ENCODE measurements at regions of chr1 and their contacts with region 1.

Region 1: DNA sequence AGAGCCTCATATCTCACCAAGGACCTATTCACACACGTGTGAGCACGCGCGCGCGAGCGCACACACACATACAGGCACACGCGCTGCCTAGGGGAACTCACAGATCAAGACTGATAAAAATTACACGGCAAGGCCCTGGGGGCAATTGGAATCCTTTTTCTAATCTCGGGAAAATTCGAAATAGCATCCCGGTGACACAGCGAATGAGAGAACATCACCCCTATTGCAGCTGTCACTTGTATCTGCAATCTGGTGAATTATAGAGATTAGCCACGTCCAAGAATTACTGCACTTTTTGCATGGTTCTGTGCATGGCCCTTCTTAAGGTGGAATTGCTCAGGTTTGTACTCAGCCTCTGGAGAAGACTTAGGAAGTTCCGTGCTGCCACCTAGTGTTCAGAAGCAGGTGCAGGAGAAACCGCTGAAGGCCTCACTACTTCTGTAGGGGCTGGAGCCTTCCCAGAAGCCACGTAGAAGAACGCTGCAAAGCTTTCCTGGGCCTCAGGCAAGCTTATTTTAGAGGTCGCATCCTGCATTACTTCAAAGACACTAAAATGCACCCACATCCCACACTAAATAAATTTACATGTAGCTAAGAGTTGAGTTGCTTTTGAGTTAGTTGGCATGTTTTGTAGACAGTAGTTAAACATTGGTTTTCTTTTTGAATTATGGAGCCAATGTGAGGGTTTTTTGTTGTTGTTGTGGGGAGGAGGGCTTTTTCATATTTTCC is 229.2 kb upstream of the CAMK1G start:
- DNase-seq: peak; percentile 77
- H3K4me3 Mint-ChIP-seq: no peak overlapping the region
- H3K27ac Mint-ChIP-seq: no peak overlapping the region
- H3K4me1 Mint-ChIP-seq: no peaks in the 10 kb centered on the region
- H3K27me3 Mint-ChIP-seq: peaks cover 3% of the 10 kb centered on the region

Region 2: DNA sequence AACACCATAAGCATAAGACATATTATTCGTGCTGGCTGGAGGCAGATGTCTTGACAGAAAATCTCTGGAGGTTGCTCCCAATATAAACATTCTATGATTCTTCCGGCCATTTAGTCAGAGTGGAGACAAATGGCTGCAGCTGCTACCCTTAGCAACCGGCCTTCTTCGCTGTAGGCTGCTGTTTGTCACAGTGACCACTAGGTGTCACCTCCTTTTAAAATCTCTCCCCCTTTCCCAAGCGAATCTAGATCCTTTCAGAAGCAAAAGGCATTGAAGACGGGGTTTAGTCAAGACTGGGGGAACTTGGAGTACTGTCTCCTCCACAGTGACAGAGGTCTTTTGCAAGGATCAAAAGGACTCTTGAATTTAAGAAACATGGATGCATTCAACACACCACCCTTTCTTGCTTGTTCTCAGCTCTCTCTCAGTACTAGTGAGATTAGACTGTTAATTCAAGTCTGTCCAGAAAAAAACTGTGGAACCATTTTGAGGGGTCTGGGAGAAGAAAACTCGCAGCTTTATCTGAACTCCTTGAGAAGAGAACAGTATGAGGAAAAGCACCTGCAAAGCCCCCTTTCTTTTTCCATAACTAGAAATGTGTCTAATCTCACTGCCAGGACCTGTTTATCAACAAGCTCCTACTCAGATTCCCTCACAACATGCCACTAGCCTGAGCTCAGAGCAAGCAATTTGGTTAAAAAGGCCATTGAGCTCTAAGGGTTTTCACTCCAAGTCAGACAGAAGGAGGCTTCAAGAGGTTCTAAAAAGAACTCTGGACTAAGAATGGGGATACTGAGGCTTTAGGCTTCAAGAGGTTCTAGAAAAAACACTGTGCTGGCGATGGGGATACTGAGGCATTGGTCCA is 701.7 kb before region 1 on chr1:
- CTCF ChIA-PET with region 1: no interaction called
- intact Hi-C with region 1: loop called (anchors 2 kb)
- DNase-seq: peak; percentile 41
- H3K4me3 Mint-ChIP-seq: no peak overlapping the region
- H3K27ac Mint-ChIP-seq: no peak overlapping the region
- H3K4me1 Mint-ChIP-seq: no peaks in the 10 kb centered on the region
- H3K27me3 Mint-ChIP-seq: peaks cover 14% of the 10 kb centered on the region

Region 3: GRCh38 chr1:209207701-209208286 is 146.5 kb before region 1 on chr1:
- CTCF ChIA-PET with region 1: interaction called, 3 read pairs
- intact Hi-C with region 1: loop called (anchors 1 kb)
- DNase-seq: peak; percentile 45
- H3K4me3 Mint-ChIP-seq: no peak overlapping the region
- H3K27ac Mint-ChIP-seq: no peak overlapping the region
- H3K4me1 Mint-ChIP-seq: peaks cover 2% of the 10 kb centered on the region
- H3K27me3 Mint-ChIP-seq: peaks cover 32% of the 10 kb centered on the region

Region 4: DNA sequence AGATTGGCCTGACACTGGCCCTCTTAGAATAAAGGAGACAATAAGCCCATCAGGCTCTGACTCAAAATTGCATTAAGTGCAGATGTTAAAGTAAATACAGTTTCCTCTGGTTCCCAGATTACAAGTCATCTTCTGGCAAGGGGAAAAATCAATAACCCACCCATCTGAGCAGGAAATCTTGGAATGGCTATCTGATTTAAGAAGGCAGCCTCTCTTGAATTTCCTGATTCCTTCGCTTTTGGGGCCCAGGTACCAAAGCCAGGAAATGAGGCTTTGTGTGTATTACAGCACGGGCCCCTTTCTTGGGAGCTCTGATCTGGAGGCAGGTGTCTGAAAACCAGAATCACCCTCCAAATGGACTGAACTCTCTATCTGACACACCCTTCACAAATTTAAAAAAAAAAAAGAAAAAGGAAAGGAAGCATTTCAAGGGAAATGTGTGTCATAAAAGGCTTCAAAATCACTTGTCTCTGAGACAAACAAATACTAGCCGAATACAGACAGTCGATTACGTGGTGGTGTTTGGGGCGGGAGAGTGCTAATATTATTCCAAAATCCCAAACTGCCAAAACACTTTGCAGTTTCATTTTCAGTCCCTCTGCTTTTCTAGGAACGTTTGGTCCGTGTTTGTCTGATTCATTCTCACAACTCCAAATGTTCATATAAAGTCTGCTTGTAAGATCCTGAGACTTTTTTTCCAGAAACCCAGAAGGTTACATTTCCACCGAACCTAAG is 11.7 kb before region 1 on chr1:
- CTCF ChIA-PET with region 1: interaction called, 14 read pairs
- intact Hi-C with region 1: no loop called
- DNase-seq: no peak
- H3K4me3 Mint-ChIP-seq: no peak overlapping the region
- H3K27ac Mint-ChIP-seq: no peak overlapping the region
- H3K4me1 Mint-ChIP-seq: no peaks in the 10 kb centered on the region
- H3K27me3 Mint-ChIP-seq: no peaks in the 10 kb centered on the region